Activated CD8-positive, alpha-beta T cell treated with anti-CD3 and anti-CD28 coated beads for 36 hours (primary cell): ENCODE measurements at regions of chr20 and their contacts with region 1.

Region 1: DNA sequence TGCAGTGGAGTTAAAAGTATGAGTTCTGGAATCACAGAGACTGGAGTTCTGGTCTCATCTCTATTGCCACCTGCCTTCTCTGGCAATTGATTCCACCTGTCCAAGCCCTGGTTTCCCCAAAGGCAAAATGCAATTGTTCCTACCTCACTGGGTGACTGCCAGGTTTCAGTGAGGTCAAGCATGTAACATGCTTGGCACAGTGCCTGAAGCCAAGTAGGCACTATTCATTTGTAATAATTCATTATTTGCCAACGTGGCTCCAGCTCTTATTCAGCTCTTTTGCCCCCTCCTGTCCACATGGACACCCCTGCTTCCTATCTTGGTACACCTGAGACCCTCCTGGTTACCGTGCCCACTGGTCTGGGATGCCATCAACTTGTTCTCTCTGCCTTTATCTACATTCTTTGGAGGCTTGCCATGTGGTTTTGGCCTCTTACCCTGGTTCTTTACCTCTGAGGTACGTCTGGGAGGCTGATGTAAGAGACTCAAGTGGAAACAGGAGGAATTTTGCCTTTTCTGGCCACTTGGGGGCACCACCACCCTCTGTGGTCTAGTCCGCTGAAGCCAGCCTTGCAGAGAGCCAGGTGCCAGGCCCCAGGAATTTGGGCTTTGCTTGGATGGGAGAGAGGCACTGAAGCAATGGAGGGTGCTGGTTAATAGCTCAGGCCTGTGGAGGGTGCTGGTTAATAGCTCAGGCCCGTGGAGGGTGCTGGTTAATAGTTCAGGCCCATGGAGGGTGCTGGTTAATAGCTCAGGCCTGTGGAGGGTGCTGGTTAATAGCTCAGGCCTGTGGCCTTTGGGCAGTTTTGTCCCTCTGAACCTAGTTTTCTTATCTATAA is 1.7 kb downstream of the KCNK15 start:
- DNase-seq: peak; percentile 87
- ATAC-seq: peak; percentile 71
- H3K4me3 Mint-ChIP-seq: peak overlapping the region; percentile 70
- H3K27ac Mint-ChIP-seq: peak overlapping the region; percentile 73
- H3K4me1 Mint-ChIP-seq: peaks cover 8% of the 10 kb centered on the region
- H3K27me3 Mint-ChIP-seq: peaks cover 20% of the 10 kb centered on the region
- CTCF ChIP-seq: peak; percentile 71

Region 2: DNA sequence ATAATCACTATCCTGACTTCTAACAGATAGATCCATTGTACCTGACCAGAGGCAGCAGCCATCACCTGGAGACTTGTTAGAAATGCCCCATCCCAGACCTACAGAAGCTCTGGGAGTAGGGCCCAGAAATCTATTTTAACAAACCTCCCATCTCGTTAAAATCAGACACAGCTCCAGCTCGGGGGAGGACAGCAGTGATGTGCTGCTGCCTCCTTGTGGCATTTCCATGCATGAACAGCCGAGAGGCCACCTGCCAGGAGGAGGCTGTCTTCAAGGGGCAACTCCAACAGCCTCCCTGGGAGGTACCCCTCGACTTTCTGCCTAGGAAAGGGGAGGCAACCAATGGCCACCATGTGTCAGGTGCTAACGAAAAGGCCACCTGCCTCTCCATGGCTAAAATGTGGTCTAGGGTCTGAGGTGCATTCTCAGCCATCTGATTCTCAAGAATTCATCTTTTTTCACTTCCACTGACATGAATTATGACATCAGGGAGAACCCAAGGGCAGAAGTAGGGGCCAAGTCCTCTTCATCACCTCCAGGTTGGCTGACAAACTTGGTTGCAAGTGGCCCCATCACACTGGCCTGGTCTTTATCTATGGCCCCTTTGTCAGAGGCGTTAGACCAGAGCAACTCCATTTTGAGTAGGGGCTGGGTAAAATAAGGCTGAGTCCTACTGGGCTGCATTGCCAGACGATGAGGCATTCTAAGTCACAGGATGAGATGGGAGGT is 13.9 kb before region 1 on chr20:
- CTCF ChIA-PET with region 1: interaction called, 15 read pairs
- POLR2A ChIA-PET with region 1: no interaction called
- intact Hi-C with region 1: no loop called
- DNase-seq: peak; percentile 77
- ATAC-seq: peak; percentile 78
- H3K4me3 Mint-ChIP-seq: no peak overlapping the region
- H3K27ac Mint-ChIP-seq: no peak overlapping the region
- H3K4me1 Mint-ChIP-seq: peaks cover 25% of the 10 kb centered on the region
- H3K27me3 Mint-ChIP-seq: no peaks in the 10 kb centered on the region
- CTCF ChIP-seq: peak; percentile 81

Region 3: GRCh38 chr20:44758247-44759101 is 11.1 kb after region 1 on chr20:
- CTCF ChIA-PET with region 1: interaction called, 20 read pairs
- POLR2A ChIA-PET with region 1: no interaction called
- intact Hi-C with region 1: no loop called
- DNase-seq: no peak
- ATAC-seq: no peak
- H3K4me3 Mint-ChIP-seq: no peak overlapping the region
- H3K27ac Mint-ChIP-seq: no peak overlapping the region
- H3K4me1 Mint-ChIP-seq: no peaks in the 10 kb centered on the region
- H3K27me3 Mint-ChIP-seq: peaks cover 3% of the 10 kb centered on the region
- CTCF ChIP-seq: no peak

Region 4: DNA sequence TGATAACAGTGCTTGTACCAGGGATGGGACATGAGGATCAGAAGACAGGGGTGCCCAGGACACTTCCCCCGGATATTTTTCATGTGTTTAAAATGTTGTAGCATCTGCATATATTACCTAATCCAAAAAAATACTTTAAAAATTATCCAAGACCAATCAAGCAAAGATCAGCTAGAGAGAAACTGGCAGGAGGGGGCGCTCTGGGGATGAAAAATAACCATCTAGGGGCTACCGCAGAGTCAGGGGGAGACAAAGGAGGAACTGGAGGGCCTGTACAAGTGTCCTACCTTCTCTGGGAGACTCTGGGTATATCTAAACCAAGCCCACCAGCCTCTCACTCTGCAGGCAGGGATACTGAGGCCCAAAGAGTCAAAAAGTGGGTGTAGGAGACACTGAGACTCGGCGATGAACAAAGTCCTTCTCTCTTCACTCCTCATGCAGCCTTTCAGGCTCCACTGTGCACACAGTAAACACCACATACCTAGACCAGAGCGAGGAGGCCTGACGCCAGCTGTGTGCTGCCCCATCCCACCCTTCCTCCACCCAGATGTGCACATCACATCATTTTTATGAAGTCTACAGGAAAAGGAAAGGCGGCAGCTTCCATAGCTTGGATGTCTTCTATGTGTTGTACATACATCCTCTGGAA is 53.1 kb after region 1 on chr20:
- CTCF ChIA-PET with region 1: interaction called, 13 read pairs
- POLR2A ChIA-PET with region 1: no interaction called
- intact Hi-C with region 1: no loop called
- DNase-seq: peak; percentile 59
- ATAC-seq: no peak
- H3K4me3 Mint-ChIP-seq: no peak overlapping the region
- H3K27ac Mint-ChIP-seq: no peak overlapping the region
- H3K4me1 Mint-ChIP-seq: no peaks in the 10 kb centered on the region
- H3K27me3 Mint-ChIP-seq: peaks cover 11% of the 10 kb centered on the region
- CTCF ChIP-seq: peak; percentile 31

Region 5: GRCh38 chr20:44866703-44867335 is 119.4 kb after region 1 on chr20:
- CTCF ChIA-PET with region 1: interaction called, 37 read pairs
- POLR2A ChIA-PET with region 1: no interaction called
- intact Hi-C with region 1: loop called (anchors 1 kb)
- DNase-seq: no peak
- ATAC-seq: no peak
- H3K4me3 Mint-ChIP-seq: peak overlapping the region; percentile 52
- H3K27ac Mint-ChIP-seq: no peak overlapping the region
- H3K4me1 Mint-ChIP-seq: peaks cover 12% of the 10 kb centered on the region
- H3K27me3 Mint-ChIP-seq: peaks cover 3% of the 10 kb centered on the region
- CTCF ChIP-seq: no peak